Activated naive CD4-positive, alpha-beta T cell treated with anti-CD3 and anti-CD28 coated beads for 36 hours (primary cell): ENCODE measurements at regions of chr17 and their contacts with region 1.

Region 1: DNA sequence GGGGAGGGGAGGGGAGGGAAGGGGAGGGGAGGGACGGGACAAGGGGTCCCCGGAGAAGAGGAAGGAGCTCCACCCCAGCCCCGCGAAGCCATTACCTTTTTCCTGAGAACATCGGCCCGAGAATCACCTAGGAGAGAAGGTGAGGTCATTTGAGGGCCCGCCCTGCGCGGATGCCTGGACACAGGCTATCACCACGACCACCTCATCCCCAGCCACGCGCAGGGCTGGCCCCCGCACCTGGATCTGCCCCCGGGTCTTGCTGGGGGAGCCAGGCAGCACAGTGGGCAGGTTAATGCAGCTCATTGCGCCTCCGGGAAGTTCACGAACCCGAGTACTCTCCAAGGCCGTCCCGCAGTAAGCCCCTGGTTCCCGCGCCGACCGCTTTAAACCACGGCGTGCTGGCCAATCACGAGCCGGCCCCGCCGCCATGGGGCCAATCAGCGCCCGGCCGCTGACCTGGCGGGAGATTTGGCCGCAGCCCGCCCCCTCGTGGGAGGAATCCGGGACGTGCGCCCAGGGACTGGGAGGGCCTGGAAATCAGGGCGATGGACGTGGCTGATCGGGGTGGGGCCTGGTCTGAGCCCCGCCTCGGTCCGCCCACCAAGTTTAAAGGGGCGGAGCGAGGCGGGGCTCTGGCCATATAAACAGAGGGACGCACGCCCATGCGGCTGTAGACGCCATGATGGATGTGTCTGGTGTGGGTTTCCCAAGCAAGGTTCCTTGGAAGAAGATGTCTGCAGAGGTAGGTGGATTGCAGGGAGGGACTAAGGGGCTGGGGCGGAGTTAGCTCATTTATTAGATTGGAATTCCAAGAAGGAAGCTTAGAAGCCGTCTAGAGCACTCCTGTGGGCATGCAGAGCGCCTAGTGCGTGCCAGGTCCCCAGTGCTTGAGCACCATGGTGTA is at the starts of genes AFMID and TK1:
- DNase-seq: peak; percentile 97
- H3K4me3 Mint-ChIP-seq: peak within 1 kb of the TSS; percentile 83
- H3K27ac Mint-ChIP-seq: peak within 1 kb of the TSS; percentile 70
- H3K4me1 Mint-ChIP-seq: peaks cover 28% of the 10 kb centered on the region
- H3K27me3 Mint-ChIP-seq: no peaks in the 10 kb centered on the region
- total RNA-seq, gene AFMID: 13.6 to 13.7 TPM
- total RNA-seq, gene TK1: 165 to 173 TPM

Region 2: DNA sequence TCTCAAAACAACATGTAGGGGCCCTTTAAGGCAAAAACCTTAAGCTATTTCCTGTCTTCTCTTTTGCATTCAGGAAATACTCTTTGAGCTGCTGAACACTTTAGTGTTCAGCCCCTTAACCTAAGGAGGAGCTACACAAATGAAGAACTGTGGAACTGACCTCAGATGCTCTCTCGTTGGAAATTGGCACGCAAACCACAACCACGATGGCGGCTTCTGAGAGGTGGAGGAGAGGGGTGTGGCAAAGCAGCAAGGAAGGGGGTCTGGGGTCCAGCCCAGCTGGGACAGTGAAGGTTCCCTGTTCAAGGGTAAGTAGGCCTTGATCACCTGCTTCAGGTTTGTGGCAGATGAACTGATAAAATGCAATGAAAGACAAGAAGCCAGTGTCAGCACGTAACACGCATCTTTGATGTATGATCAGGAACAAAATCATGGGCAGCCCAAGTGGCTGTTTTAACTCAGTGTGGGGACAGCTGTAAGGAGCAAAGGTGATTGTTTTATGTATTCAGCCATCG is 520.0 kb before region 1 on chr17:
- CTCF ChIA-PET with region 1: no interaction called
- intact Hi-C with region 1: no loop called
- DNase-seq: peak; percentile 86
- H3K4me3 Mint-ChIP-seq: peak overlapping the region; percentile 94
- H3K27ac Mint-ChIP-seq: peak overlapping the region; percentile 98
- H3K4me1 Mint-ChIP-seq: peaks cover 49% of the 10 kb centered on the region
- H3K27me3 Mint-ChIP-seq: no peaks in the 10 kb centered on the region

Region 3: DNA sequence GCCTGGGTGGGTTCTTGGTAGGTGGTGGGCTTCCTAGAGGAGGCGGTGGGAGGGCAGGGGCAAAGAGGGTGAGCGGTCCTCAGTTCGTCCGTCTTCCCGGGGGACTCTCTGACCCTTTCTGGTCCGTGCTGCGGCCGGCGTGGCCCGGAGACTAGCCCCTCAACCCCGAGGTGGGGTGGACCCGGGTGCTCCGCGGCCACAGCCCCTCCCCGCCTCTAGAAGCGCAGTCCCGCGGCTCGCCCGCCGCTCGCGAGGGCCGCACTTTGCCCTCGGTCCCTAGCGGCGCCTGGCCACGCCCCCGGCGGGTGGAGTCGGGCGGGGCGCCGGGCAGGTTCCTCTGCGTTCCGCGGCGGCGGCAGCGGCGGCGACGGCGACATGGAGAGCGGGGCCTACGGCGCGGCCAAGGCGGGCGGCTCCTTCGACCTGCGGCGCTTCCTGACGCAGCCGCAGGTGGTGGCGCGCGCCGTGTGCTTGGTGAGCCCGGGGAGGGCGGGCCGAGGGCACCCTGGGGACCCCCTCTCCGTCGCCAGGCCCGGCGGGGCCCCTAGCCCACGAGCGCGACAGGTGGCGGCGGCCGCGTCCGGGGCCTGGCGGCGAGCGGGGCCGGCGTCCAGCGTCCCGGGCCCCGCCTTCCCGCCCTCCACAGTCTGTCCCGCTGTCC is 18.6 kb before region 1 on chr17 and contains the start of gene SYNGR2:
- CTCF ChIA-PET with region 1: interaction called, 5 read pairs
- intact Hi-C with region 1: loop called (anchors 1 kb)
- DNase-seq: peak; percentile 87
- H3K4me3 Mint-ChIP-seq: peak within 1 kb of the TSS; percentile 75
- H3K27ac Mint-ChIP-seq: peak within 1 kb of the TSS; percentile 85
- H3K4me1 Mint-ChIP-seq: peaks cover 37% of the 10 kb centered on the region
- H3K27me3 Mint-ChIP-seq: no peaks in the 10 kb centered on the region
- total RNA-seq, gene SYNGR2: 96.3 to 103 TPM

Region 4: DNA sequence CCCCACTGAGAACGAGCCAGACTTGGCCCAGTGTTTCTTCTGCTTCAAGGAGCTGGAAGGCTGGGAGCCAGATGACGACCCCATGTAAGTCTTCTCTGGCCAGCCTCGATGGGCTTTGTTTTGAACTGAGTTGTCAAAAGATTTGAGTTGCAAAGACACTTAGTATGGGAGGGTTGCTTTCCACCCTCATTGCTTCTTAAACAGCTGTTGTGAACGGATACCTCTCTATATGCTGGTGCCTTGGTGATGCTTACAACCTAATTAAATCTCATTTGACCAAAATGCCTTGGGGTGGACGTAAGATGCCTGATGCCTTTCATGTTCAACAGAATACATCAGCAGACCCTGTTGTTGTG is 27.7 kb after region 1 on chr17:
- CTCF ChIA-PET with region 1: no interaction called
- intact Hi-C with region 1: loop called (anchors 2 kb)
- DNase-seq: no peak
- H3K4me3 Mint-ChIP-seq: peak overlapping the region; percentile 92
- H3K27ac Mint-ChIP-seq: peak overlapping the region; percentile 19
- H3K4me1 Mint-ChIP-seq: peaks cover 8% of the 10 kb centered on the region
- H3K27me3 Mint-ChIP-seq: no peaks in the 10 kb centered on the region